PC-9 (cell line): ENCODE measurements at regions of chr10 and their contacts with region 1.

Region 1: GRCh38 chr10:70391654-70392053 is 9.2 kb upstream of the LRRC20 start:
- DNase-seq: no peak
- H3K4me3 ChIP-seq: no peak overlapping the region
- H3K27ac ChIP-seq: no peak overlapping the region
- H3K4me1 ChIP-seq: peaks cover 5% of the 10 kb centered on the region; the same call in 1 of the 2 replicates
- H3K27me3 ChIP-seq: no peaks in the 10 kb centered on the region
- CTCF ChIP-seq: no peak

Region 2: DNA sequence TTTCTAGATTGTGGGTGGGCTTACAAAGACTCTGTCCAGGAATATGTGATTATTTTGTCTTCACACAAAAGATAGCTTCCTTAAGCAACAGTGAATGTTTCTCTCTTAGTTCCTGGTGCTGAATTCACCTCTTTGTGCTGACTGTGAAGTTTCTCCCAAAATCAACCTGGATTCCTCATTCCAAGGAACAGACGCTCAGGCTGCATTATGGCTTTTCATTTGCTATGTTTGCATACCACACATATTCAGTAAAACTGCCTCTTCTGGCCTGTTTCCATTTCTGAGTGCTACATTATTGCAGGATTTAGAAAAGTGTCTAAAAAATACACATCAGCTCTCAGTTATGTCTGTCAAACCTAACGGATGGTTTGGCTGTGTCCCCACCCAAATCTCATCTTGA is 317.5 kb before region 1 on chr10:
- CTCF ChIA-PET with region 1: no interaction called
- POLR2A ChIA-PET with region 1: no interaction called
- intact Hi-C with region 1: no loop called
- DNase-seq: no peak
- H3K4me3 ChIP-seq: no peak overlapping the region
- H3K27ac ChIP-seq: no peak overlapping the region
- H3K4me1 ChIP-seq: no peaks in the 10 kb centered on the region
- H3K27me3 ChIP-seq: peaks cover 43% of the 10 kb centered on the region
- CTCF ChIP-seq: no peak

Region 3: GRCh38 chr10:70132098-70133029 is 259.3 kb before region 1 on chr10 and contains the start of gene AIFM2:
- CTCF ChIA-PET with region 1: interaction called, 13 read pairs
- POLR2A ChIA-PET with region 1: no interaction called
- intact Hi-C with region 1: no loop called
- DNase-seq: peak; percentile 78 to 90
- H3K4me3 ChIP-seq: peak within 1 kb of the TSS; percentile 100
- H3K27ac ChIP-seq: peak within 1 kb of the TSS; percentile 90
- H3K4me1 ChIP-seq: peaks cover 20% of the 10 kb centered on the region
- H3K27me3 ChIP-seq: no peaks in the 10 kb centered on the region
- CTCF ChIP-seq: peak; percentile 19; the same call in 1 of the 2 replicates
- total RNA-seq, gene AIFM2: 40.3 and 47.0 TPM in 2 replicates

Region 4: GRCh38 chr10:70169649-70170364 is 221.8 kb before region 1 on chr10:
- CTCF ChIA-PET with region 1: no interaction called
- POLR2A ChIA-PET with region 1: interaction called, 10 read pairs
- intact Hi-C with region 1: no loop called
- DNase-seq: no peak
- H3K4me3 ChIP-seq: peak overlapping the region; percentile 98
- H3K27ac ChIP-seq: 0 out of 2 replicates have a peak overlapping the region, but pooled peaks have one; percentile 68
- H3K4me1 ChIP-seq: peaks cover 36% of the 10 kb centered on the region
- H3K27me3 ChIP-seq: no peaks in the 10 kb centered on the region
- CTCF ChIP-seq: no peak

Region 5: DNA sequence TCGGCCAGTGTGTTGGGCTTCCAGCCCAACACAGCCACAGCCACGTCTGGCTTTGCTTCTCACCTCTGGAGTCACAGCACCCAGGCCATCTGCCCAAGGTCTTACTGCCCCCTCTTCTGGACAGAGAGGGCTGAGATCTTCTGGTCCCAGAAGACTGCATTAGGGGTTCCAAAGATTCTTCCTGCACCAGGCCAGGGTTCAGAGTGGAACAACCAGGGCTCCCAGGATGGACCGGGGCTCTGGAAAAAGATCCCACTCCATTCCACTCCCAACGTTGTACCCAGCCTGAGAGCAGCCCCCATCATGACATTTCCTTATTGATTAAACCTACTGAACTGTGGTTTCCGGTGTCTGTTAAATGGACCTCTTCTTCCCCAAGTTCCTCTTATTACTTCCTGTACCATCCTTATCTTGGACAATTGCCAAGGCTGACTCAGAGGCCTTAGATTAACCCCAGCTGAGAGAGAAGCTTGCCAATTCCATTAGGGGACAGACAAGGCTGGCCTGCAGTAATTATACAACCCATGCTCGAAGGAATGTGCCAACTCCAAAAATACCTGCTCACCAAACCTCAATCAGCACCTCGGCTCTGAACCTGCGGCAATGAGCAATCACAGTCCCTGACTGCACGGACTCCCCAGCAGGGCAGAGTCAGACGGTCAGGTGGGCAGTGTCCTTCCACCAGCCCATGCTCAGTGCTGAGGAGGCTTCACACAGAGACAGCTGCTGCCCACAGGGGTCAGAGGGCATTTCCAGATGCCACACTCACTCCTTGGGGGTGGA is 60.0 kb before region 1 on chr10:
- CTCF ChIA-PET with region 1: no interaction called
- POLR2A ChIA-PET with region 1: no interaction called
- intact Hi-C with region 1: loop called (anchors 1 kb)
- DNase-seq: peak; percentile 82 to 98
- H3K4me3 ChIP-seq: no peak overlapping the region
- H3K27ac ChIP-seq: peak overlapping the region; percentile 59
- H3K4me1 ChIP-seq: peaks cover 27% of the 10 kb centered on the region
- H3K27me3 ChIP-seq: no peaks in the 10 kb centered on the region
- CTCF ChIP-seq: peak; percentile 55; the same call in 1 of the 2 replicates

Region 6: DNA sequence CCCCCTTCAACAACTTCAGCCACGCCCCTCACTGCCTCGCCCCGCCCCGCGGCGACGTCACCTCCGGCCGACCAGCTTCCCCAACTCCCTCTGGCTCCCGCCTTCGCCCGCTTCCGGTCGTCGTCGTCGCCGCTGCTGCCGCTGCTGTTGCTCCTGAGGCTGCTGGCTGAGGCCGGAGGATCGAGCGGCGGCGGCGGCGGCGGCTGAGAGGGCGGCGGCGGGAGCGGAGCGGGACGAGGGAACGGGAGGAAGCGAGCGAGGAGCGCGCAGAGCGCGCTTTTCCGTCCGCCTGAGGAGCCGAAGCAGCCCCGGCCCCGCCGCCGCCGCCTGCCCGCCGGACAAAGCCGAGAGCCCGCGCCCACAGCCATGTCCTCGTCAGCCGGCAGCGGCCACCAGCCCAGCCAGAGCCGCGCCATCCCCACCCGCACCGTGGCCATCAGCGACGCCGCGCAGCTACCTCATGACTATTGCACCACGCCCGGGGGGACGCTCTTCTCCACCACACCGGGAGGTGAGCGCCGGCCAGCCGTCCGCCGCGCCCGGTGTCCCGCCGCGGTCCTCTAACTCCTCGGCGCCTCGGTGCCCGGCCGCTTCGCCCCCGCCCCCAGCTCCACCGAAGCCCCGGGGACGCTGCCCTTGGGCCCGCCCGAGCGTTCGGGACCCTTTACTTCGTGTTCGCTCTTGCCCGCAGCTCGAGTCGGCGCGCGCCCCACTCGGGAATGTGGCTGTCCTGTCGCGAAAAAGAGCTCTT is 12.6 kb after region 1 on chr10 and contains the start of gene EIF4EBP2:
- CTCF ChIA-PET with region 1: interaction called, 19 read pairs
- POLR2A ChIA-PET with region 1: interaction called, 8 read pairs
- intact Hi-C with region 1: no loop called
- DNase-seq: peak; percentile 86 to 99
- H3K4me3 ChIP-seq: peak within 1 kb of the TSS; percentile 82
- H3K27ac ChIP-seq: peak within 1 kb of the TSS; percentile 70
- H3K4me1 ChIP-seq: peaks cover 24% of the 10 kb centered on the region
- H3K27me3 ChIP-seq: no peaks in the 10 kb centered on the region
- CTCF ChIP-seq: no peak; the same call in 1 of the 2 replicates
- total RNA-seq, gene EIF4EBP2: 57.4 and 80.3 TPM in 2 replicates

Region 7: GRCh38 chr10:71383972-71384687 is 992.5 kb after region 1 on chr10:
- CTCF ChIA-PET with region 1: no interaction called
- POLR2A ChIA-PET with region 1: no interaction called
- intact Hi-C with region 1: no loop called
- DNase-seq: peak in 1 of 2 experiments; percentile 77
- H3K4me3 ChIP-seq: no peak overlapping the region
- H3K27ac ChIP-seq: no peak overlapping the region
- H3K4me1 ChIP-seq: peaks cover 8% of the 10 kb centered on the region
- H3K27me3 ChIP-seq: no peaks in the 10 kb centered on the region
- CTCF ChIP-seq: peak; percentile 98